Activated CD4-positive, alpha-beta memory T cell treated with anti-CD3 and anti-CD28 coated beads for 36 hours (primary cell): ENCODE measurements at regions of chr1 and their contacts with region 1.

Region 1: GRCh38 chr1:210143465-210144062 is 89.0 kb upstream of the SERTAD4 start:
- DNase-seq: peak; percentile 66
- H3K4me3 Mint-ChIP-seq: no peak overlapping the region
- H3K27ac Mint-ChIP-seq: no peak overlapping the region
- H3K4me1 Mint-ChIP-seq: no peaks in the 10 kb centered on the region
- H3K27me3 Mint-ChIP-seq: peaks cover 12% of the 10 kb centered on the region

Region 2: GRCh38 chr1:210132582-210132981 is 11.0 kb before region 1 on chr1:
- CTCF ChIA-PET with region 1: interaction called, 11 read pairs
- POLR2A ChIA-PET with region 1: no interaction called
- intact Hi-C with region 1: no loop called
- DNase-seq: no peak
- H3K4me3 Mint-ChIP-seq: no peak overlapping the region
- H3K27ac Mint-ChIP-seq: no peak overlapping the region
- H3K4me1 Mint-ChIP-seq: no peaks in the 10 kb centered on the region
- H3K27me3 Mint-ChIP-seq: no peaks in the 10 kb centered on the region

Region 3: DNA sequence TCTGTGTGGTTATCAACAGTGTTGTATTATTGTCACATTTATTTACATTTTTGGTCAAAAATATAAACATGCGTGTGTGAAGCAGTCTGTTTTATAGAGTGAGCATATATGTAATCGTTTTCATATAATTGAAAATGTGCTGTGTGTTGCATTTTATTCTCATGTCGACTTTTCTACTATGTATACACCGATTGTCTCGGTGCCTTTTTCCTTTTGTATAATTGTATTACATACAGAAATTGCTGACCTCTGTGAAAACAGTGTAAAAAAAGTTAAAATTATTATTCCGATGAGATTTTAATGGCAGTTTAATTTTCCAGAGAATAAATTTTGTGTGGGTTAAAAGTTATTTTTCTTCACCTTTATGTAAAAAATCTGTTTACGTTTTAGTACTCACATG is 26.7 kb after region 1 on chr1:
- CTCF ChIA-PET with region 1: no interaction called
- POLR2A ChIA-PET with region 1: no interaction called
- intact Hi-C with region 1: no loop called
- DNase-seq: no peak
- H3K4me3 Mint-ChIP-seq: no peak overlapping the region
- H3K27ac Mint-ChIP-seq: no peak overlapping the region
- H3K4me1 Mint-ChIP-seq: no peaks in the 10 kb centered on the region
- H3K27me3 Mint-ChIP-seq: peaks cover 10% of the 10 kb centered on the region

Region 4: DNA sequence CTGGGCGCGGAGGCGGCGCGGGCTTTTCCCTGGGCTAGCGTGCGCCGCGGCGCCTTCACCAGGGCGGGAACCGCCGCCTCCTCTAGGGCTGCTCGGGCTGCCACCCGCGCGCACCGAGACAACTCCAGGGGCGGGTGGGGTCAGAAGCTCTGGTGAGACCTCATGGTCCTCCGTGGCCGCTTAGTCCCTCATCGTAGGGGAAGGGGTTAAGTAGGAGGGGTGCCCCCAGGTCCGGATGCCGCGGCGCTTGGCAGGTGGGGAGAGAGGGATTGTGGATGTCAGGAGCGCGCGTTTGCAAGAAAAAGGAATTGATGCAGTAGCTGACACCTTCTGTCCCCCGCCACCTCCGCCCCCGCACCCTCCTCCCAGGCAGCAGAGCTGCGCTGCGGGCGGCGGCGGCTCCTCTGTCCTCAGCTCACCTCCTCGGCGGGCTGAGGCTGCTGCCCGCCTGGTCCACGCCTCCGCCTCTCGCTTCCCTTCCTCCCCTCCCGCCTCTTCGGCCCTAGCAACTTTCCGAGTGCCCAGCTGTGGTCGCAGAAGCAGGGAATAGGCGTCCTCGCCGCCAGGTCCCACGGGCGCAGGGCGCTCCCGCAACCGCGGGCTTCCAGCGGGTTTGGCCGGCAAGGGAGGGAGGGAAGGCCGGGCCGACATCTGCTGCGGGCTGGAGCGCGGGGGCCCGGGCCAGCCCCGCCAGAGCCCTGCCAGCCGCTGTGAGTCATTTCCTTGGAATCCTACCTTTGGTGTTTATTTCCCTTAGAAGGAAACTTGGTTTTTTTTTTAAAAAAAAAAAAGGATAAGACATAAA is 89.9 kb after region 1 on chr1:
- CTCF ChIA-PET with region 1: interaction called, 4 read pairs
- POLR2A ChIA-PET with region 1: no interaction called
- intact Hi-C with region 1: loop called (anchors 5 kb)
- DNase-seq: peak; percentile 53
- H3K4me3 Mint-ChIP-seq: peak overlapping the region; percentile 36
- H3K27ac Mint-ChIP-seq: no peak overlapping the region
- H3K4me1 Mint-ChIP-seq: peaks cover 8% of the 10 kb centered on the region
- H3K27me3 Mint-ChIP-seq: peaks cover 54% of the 10 kb centered on the region